Dorsolateral prefrontal cortex (tissue), 120 donors: ENCODE measurements at regions of chr7 and their contacts with region 1.

Region 1: DNA sequence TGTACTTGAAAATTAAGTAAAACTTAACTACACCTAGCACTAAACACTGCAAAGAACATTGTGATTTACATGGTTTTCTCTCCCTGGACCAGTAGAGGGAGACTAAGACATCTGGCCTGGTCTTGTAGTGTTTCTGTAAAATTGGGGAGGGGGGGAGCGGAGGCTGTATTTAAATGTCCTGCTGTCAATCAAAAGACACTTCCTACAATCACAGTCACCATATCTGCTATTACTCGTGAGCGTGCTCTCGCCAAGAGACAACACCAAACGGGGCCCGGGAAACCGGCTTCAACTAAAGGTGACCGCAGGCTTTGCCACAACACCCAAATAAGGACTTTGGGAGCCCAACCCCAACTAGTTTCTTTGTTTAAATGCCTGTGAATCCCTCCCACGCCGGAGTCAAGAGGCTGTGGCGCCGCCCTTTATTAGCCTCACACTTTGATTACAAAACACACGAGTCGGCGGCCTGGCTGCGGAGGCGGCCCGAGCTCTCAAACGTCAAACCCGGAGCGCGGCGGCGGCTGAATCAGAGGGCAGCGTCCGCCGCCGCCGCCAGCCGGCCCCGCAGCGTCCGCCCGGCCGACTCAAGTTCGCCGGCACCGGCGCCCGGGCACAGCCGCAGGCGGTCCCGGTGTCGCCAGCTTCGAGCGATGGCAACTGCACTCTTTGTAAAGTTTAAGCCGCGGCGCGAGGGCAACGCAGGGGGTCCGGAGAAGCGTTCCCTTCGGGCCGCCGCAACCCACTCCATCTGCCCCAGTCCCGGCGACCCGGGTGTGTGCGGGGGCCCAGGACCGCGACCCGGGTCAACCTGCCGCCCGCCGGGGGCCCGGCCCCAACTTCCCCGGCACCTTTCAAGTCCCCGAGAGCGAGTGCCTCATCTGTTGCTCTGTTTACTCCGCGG is 1.3 kb downstream of the KDM7A start:
- DNase-seq: peak; percentile 56 to 84 (median 74)
- H3K4me3 ChIP-seq: peak overlapping the region; percentile 65 to 93 (median 81)
- H3K27ac ChIP-seq: peak overlapping the region; percentile 26 to 98 (median 93)
- H3K27me3 ChIP-seq: no peaks in the 10 kb centered on the region
- CTCF ChIP-seq: peak; percentile 59 to 90 (median 80)

Region 2: GRCh38 chr7:140260352-140261104 is 85.1 kb after region 1 on chr7:
- intact Hi-C with region 1: loop called in 1 of 2 experiments (anchors 5 kb)
- DNase-seq: peak in 2 of 10 donors; percentile 44 to 45
- H3K4me3 ChIP-seq: peak overlapping the region in 4 of 59 donors; percentile 3 to 32 (median 6)
- H3K27ac ChIP-seq: peak overlapping the region in 2 of 59 donors; percentile 6
- H3K27me3 ChIP-seq: no peaks in the 10 kb centered on the region
- CTCF ChIP-seq: peak in 1 of 56 donors; percentile 12

Region 3: GRCh38 chr7:140316165-140316661 is 140.7 kb after region 1 on chr7:
- intact Hi-C with region 1: loop called in 1 of 2 experiments (anchors 5 kb)
- DNase-seq: peak; percentile 35 to 94 (median 80)
- H3K4me3 ChIP-seq: peak overlapping the region in 54 of 59 donors; percentile 1 to 58 (median 36)
- H3K27ac ChIP-seq: peak overlapping the region in 56 of 59 donors; percentile 9 to 90 (median 73)
- H3K27me3 ChIP-seq: no peaks in the 10 kb centered on the region
- CTCF ChIP-seq: peak in 2 of 56 donors; percentile 12 to 15

Region 4: DNA sequence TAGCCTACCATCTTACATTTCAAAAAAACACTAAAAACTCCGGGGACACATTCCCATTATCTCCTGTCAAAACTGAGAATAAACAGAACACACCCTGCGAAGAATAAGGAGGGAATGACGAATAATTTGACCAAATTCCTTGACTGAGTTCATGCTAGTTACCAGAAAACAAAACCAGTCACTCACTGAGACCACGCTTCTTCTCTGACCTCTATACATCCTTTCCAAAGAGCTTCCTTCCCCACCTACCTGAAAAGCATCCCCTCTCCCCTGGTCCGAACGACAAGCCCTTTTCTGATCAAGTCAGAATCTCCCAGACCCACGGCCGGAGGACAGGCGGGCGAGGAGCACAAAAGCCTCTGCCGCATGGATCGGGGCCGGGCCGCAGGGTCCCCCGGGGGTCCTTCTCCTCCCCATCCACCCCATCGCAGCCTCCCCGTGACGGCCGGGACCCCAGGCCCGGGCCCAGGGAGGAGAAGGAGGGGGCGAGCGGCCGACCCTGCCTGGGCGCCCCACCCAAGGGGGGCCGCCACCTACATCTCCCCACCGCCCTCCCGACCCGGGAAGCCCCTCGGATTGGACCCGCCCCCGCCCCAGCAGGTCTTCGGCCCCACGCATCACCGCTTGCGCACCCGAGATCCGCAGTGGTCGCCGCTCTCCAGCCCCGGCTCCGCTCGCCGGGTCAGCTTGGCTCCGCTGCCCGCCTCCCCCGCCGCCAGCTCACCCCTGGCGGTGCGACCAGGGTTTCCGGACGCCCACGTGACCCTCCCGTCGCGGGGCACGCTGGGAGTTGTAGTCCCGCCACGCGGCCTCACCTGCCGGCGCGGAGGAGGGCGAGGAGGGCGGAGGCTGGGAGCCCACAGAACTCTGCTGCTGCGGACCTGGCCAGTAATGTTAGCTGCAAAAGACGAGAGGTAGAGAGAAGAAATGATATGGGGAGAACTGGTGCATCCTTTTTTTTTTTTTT is 222.6 kb after region 1 on chr7 and contains the start of gene SLC37A3:
- intact Hi-C with region 1: loop called in 1 of 2 experiments (anchors 5 kb)
- DNase-seq: peak; percentile 75 to 93 (median 84)
- H3K4me3 ChIP-seq: peak within 1 kb of the TSS; percentile 54 to 99 (median 93)
- H3K27ac ChIP-seq: peak within 1 kb of the TSS in 44 of 59 donors; percentile 38 to 92 (median 72)
- H3K27me3 ChIP-seq: peaks cover 0 to 7% (median 0%) of the 10 kb centered on the region in 45 donors
- CTCF ChIP-seq: peak in 47 of 56 donors; percentile 4 to 60 (median 37)
- total RNA-seq, gene SLC37A3: 27.2 to 72.2 (median 47.1) TPM

Region 5: GRCh38 chr7:140673063-140673773 is 497.7 kb after region 1 on chr7:
- intact Hi-C with region 1: no loop called
- DNase-seq: peak in 5 of 10 donors; percentile 26 to 74 (median 45)
- H3K4me3 ChIP-seq: peak overlapping the region; percentile 58 to 98 (median 83)
- H3K27ac ChIP-seq: peak overlapping the region; percentile 46 to 97 (median 90)
- H3K27me3 ChIP-seq: no peaks in the 10 kb centered on the region
- CTCF ChIP-seq: peak in 5 of 56 donors; percentile 6 to 25 (median 7)